ENCODE measurements at regions of chr18 and their contacts with region 1.

Region 1: DNA sequence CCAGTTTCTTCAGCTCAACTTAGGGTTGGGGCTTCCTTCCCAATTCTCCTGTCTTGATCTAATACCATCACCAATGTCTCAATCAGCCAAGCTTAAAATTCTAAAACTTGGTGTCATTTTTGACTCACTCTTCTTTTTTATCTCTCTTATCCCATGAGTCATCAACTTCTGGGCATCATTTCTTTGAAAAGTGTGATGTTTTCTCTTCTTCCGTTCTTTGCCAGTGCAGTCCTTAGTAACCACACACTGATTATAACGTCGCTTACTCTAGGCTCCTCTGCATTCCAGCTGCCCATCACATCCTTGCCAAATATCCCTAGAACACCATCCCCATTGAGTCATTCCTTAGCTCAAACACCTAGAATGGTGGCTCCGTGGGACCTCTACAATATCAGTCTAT is 27.4 kb upstream of the MRO start:
- DNase-seq: no peak
- H3K4me3 ChIP-seq: no peak overlapping the region
- H3K27ac ChIP-seq: no peak overlapping the region
- H3K27me3 ChIP-seq: peaks cover 3% of the 10 kb centered on the region
- CTCF ChIP-seq: no peak

Region 2: DNA sequence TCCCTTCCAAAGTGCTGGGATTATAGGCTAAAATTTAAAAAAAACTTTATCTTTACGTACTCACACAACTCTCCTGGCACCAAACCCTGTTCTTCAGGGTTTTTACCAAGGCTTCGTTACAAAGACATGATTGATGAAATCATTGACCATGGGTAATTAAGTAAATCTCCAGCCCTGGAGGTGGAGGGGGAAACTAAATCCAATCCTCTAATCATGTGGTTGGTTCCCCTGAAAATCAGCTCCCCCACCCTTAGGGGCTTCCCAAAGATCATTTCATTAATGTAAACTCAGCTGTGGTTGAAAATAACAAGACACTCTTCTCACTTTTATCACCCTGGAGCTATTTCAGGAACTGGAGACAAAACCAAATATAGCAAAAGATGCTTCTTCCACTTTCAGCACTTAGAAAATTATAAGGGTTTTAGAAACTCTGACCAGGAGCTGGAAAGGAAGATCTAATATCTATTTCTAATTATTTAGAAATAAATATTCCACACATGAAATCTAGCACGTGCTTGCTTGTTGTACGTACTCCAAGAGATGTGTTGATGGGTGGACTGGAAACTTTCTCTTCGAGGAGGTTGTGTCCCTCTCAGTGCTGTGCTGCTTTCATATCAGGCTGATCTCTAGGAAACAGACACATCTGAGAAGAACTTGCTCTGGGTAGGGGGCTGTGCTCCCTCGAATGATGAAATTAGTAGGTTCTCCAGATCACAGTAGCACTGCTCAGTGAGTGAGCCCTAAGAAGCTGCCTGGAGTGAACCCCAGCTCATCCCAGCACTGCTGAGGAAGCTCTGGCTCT is 250.0 kb after region 1 on chr18:
- CTCF ChIA-PET with region 1: interaction called, 10 read pairs
- POLR2A ChIA-PET with region 1: no interaction called
- DNase-seq: no peak
- H3K4me3 ChIP-seq: no peak overlapping the region
- H3K27ac ChIP-seq: no peak overlapping the region
- H3K27me3 ChIP-seq: no peaks in the 10 kb centered on the region
- CTCF ChIP-seq: no peak